Activated T-helper 1 cell treated with anti-CD3 and anti-CD28 coated beads, Interleukin-12 subunit alpha, Interleukin-12 subunit beta, Interleukin-2, Interleukin-4 antibody, amounts not matched to agents 30 ng/mL and 10 ng/mL and 1 ng/mL, durations not matched to agents 14 hours and 24 hours and 36 hours (primary cell): ENCODE measurements at regions of chr18 and their contacts with region 1.

Region 1: DNA sequence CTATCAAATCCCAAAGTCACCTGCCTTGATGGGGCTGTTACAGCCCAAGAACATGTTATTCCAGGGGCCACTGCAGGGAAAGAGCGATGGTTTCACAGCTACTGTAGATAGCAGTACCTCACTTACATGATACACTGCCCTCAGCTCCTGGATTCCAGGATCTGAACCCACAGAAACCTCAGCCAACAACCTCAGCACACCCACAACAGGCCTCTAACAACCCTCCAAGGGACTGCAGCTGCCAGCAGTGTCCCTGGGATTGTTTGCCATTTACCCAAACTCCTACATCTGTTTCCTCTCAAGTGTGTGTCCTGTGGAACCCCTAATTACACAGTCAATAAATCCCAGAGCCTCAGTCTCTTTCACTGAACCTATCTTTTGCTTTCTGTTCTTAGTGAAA is 28.2 kb downstream of the OSBPL1A start:
- DNase-seq: no peak
- H3K4me3 Mint-ChIP-seq: no peak overlapping the region
- H3K27ac Mint-ChIP-seq: peak overlapping the region; percentile 35
- H3K4me1 Mint-ChIP-seq: peaks cover 23% of the 10 kb centered on the region
- H3K27me3 Mint-ChIP-seq: peaks cover 7% of the 10 kb centered on the region

Region 2: GRCh38 chr18:24054130-24054529 is 315.3 kb before region 1 on chr18:
- intact Hi-C with region 1: loop called (anchors 1 kb)
- DNase-seq: no peak
- H3K4me3 Mint-ChIP-seq: peak overlapping the region; percentile 12
- H3K27ac Mint-ChIP-seq: peak overlapping the region; percentile 74
- H3K4me1 Mint-ChIP-seq: peaks cover 76% of the 10 kb centered on the region
- H3K27me3 Mint-ChIP-seq: no peaks in the 10 kb centered on the region

Region 3: GRCh38 chr18:24380163-24380747 is 10.8 kb after region 1 on chr18:
- intact Hi-C with region 1: no loop called
- DNase-seq: no peak
- H3K4me3 Mint-ChIP-seq: no peak overlapping the region
- H3K27ac Mint-ChIP-seq: no peak overlapping the region
- H3K4me1 Mint-ChIP-seq: peaks cover 9% of the 10 kb centered on the region
- H3K27me3 Mint-ChIP-seq: peaks cover under 1% of the 10 kb centered on the region

Region 4: DNA sequence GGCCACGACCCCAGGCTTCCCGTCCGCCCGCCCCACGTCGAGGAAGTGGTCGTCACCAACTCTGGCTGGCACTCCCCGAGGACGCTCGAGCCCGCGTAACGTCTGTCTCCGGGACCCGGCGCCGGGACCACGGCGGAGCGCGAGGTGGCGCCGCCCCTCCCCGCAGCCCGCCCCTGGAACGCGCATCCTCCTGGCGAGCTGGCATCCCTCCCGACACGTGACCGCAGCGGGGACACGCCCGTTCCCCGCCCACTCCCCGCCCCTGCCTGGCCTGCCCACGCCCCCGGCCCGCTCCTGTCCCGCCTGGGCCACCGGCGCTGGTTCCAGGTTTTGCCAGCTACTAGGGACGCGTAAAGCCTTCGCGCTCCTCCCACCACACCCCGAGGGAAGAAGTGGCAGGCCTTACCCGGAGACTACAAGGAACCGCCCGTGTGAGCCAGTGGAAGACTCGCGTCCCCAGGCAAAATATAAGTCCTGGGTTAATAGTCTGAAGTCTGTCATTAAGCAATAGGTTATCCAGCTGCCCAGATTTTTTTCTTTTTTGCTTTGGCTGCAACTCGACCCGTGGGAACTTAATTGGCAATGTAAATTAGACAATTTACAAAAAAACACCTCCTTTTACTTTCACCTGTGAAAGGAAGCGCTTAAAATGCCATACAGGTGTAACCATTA is 28.4 kb after region 1 on chr18 and contains the start of gene OSBPL1A:
- intact Hi-C with region 1: loop called (anchors 1 kb)
- DNase-seq: peak; percentile 58
- H3K4me3 Mint-ChIP-seq: peak within 1 kb of the TSS; percentile 83
- H3K27ac Mint-ChIP-seq: peak within 1 kb of the TSS; percentile 45
- H3K4me1 Mint-ChIP-seq: peaks cover 12% of the 10 kb centered on the region
- H3K27me3 Mint-ChIP-seq: peaks cover 22% of the 10 kb centered on the region
- total RNA-seq, gene OSBPL1A: 2.2 and 2.5 TPM in 2 replicates

Region 5: GRCh38 chr18:24426398-24427294 is 57.2 kb after region 1 on chr18 and contains the start of gene IMPACT:
- intact Hi-C with region 1: loop called (anchors 1 kb)
- DNase-seq: peak; percentile 64
- H3K4me3 Mint-ChIP-seq: peak within 1 kb of the TSS; percentile 86
- H3K27ac Mint-ChIP-seq: peak within 1 kb of the TSS; percentile 87
- H3K4me1 Mint-ChIP-seq: peaks cover 27% of the 10 kb centered on the region
- H3K27me3 Mint-ChIP-seq: peaks cover 20% of the 10 kb centered on the region
- total RNA-seq, gene IMPACT: 9.5 and 11.8 TPM in 2 replicates

Region 6: GRCh38 chr18:24456549-24456948 is 87.1 kb after region 1 on chr18:
- intact Hi-C with region 1: loop called (anchors 1 kb)
- DNase-seq: no peak
- H3K4me3 Mint-ChIP-seq: peak overlapping the region; percentile 26
- H3K27ac Mint-ChIP-seq: peak overlapping the region; percentile 55
- H3K4me1 Mint-ChIP-seq: peaks cover 28% of the 10 kb centered on the region
- H3K27me3 Mint-ChIP-seq: no peaks in the 10 kb centered on the region